ENCODE measurements at regions of chr12 and their contacts with region 1.

Region 1: GRCh38 chr12:50006789-50007436 is 18.4 kb downstream of the RACGAP1 start:
- DNase-seq: no peak
- H3K4me3 ChIP-seq: no peak overlapping the region
- H3K27ac ChIP-seq: no peak overlapping the region
- H3K4me1 ChIP-seq: no peaks in the 10 kb centered on the region
- H3K27me3 ChIP-seq: no peaks in the 10 kb centered on the region
- CTCF ChIP-seq: no peak

Region 2: DNA sequence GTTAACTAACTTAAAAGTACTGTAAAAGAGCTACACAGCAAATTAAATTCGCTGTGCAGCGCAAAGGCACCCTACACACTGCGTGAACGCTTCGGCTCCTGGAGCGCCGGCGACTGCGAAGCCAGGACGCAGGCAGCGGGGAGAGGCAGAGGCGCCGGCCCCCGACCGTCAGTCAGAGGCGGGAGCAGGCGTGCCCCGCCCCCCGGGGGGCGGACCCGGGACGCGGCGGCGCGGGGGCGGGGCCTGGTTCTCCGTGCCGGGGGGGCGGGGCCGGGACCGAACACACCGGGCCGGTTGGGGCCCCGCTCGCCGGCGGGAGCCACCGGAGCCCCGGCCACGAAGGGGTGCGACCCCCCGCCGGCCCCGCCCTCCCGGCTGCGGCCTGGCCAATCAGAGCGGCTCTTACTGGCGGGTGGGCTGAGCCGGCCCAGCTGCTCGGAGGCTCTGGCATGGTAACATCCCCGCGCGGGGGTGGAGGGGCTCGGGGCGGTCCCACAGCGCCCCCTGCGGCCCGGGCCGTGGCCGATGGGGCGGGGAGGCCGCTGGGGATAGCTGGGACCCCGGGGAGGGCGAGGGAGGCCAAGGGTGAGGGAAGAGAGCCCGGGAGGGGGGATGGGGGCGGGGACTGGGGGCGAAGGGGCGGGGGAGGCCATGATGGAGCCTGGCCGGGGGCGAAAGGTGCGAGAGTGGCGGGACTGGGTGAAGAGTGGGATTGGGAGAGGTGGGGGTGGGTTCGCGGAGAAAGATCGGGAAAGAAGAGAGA is 383.6 kb before region 1 on chr12 and contains the start of gene PRPF40B:
- dilution Hi-C with region 1: no loop called
- DNase-seq: no peak
- H3K4me3 ChIP-seq: peak within 1 kb of the TSS; percentile 35 to 74 (median 65)
- H3K27ac ChIP-seq: peak within 1 kb of the TSS; percentile 80
- H3K4me1 ChIP-seq: peaks cover 64% of the 10 kb centered on the region
- H3K27me3 ChIP-seq: no peaks in the 10 kb centered on the region
- CTCF ChIP-seq: peak in 2 of 3 experiments; percentile 38 to 57
- polyA plus RNA-seq, gene PRPF40B: 12.7 to 19.0 TPM (median 13.3 TPM) in 3 replicates

Region 3: DNA sequence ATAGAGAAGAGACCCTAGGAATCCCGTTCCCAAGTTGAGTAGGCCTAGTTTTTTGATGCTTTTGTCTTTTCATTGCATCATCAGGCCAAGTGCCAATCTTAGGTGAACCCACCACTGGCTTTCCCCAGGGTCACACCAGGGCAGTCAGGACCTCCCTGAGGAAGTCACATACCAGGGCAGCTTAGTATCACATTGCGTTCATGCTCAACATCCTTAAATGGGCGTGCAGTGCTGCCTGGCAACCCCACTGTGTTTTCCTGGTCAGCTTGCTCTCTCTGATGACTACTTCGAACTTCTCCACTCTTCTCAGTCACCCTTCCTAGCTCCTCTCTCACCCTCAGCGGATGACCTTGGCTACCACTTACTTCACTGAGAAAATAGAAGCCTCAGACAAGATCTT is 59.5 kb after region 1 on chr12:
- dilution Hi-C with region 1: loop called (anchors 10 kb)
- DNase-seq: no peak
- H3K4me3 ChIP-seq: no peak overlapping the region
- H3K27ac ChIP-seq: no peak overlapping the region
- H3K4me1 ChIP-seq: peaks cover 12% of the 10 kb centered on the region
- H3K27me3 ChIP-seq: no peaks in the 10 kb centered on the region
- CTCF ChIP-seq: no peak

Measured in keratinocyte (primary cell).